ENCODE measurements at regions of chr13 and their contacts with region 1.

Region 1: GRCh38 chr13:63090524-63090923 is 1674.9 kb upstream of the PCDH20 start:
- DNase-seq: no peak
- H3K4me3 ChIP-seq: no peak overlapping the region
- H3K27ac ChIP-seq: no peak overlapping the region
- H3K4me1 ChIP-seq: no peaks in the 10 kb centered on the region
- H3K27me3 ChIP-seq: no peaks in the 10 kb centered on the region
- CTCF ChIP-seq: no peak
- EP300 ChIP-seq: no peak
- POLR2A ChIP-seq: no peak

Region 2: DNA sequence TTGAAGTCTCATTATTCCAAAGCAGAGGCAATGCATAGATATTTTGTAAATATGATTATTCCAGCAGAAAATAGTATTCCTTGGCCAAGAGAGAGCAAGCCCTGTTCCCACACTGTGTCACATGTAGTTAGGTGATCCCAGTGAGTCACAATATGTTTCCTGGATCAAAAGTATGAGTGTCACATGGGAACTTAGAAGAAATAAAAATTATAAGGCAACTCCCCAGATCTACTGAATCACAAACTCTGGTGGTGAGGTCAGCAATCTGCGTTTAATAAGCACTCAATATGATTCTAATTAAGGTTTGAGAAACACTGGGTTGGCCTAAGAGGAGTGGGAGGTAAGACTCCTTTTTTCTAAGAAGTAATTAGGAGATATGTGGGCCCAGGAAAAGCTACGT is 170.4 kb before region 1 on chr13:
- in situ Hi-C with region 1: no loop called
- intact Hi-C with region 1: no loop called
- DNase-seq: no peak
- H3K4me3 ChIP-seq: no peak overlapping the region
- H3K27ac ChIP-seq: no peak overlapping the region
- H3K4me1 ChIP-seq: no peaks in the 10 kb centered on the region
- H3K27me3 ChIP-seq: no peaks in the 10 kb centered on the region
- CTCF ChIP-seq: no peak
- EP300 ChIP-seq: no peak
- POLR2A ChIP-seq: no peak

Region 3: DNA sequence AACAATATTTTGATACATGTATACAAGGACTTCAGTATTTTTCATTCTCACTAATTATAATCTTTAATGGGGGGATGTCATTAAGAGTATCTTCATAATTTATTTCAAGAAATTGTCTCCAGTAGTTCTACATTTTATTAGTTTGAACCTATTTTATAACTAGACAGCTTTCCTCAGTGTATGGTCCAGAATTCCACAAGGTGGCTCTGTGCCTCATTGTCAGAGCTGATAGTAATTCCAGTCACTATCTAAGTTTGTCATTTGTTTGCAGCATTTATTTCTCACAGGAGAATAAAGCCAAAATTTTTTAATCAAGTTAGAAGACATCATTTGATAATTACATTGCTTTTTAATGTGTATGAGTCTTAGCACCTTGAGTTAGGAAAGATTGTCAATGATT is 41.9 kb before region 1 on chr13:
- in situ Hi-C with region 1: no loop called
- intact Hi-C with region 1: loop called (anchors 2 kb)
- DNase-seq: no peak
- H3K4me3 ChIP-seq: no peak overlapping the region
- H3K27ac ChIP-seq: no peak overlapping the region
- H3K4me1 ChIP-seq: no peaks in the 10 kb centered on the region
- H3K27me3 ChIP-seq: no peaks in the 10 kb centered on the region
- CTCF ChIP-seq: no peak
- EP300 ChIP-seq: no peak
- POLR2A ChIP-seq: no peak